Activated CD4-positive, alpha-beta T cell treated with anti-CD3 and anti-CD28 coated beads for 36 hours (primary cell): ENCODE measurements at regions of chr9 and their contacts with region 1.

Region 1: DNA sequence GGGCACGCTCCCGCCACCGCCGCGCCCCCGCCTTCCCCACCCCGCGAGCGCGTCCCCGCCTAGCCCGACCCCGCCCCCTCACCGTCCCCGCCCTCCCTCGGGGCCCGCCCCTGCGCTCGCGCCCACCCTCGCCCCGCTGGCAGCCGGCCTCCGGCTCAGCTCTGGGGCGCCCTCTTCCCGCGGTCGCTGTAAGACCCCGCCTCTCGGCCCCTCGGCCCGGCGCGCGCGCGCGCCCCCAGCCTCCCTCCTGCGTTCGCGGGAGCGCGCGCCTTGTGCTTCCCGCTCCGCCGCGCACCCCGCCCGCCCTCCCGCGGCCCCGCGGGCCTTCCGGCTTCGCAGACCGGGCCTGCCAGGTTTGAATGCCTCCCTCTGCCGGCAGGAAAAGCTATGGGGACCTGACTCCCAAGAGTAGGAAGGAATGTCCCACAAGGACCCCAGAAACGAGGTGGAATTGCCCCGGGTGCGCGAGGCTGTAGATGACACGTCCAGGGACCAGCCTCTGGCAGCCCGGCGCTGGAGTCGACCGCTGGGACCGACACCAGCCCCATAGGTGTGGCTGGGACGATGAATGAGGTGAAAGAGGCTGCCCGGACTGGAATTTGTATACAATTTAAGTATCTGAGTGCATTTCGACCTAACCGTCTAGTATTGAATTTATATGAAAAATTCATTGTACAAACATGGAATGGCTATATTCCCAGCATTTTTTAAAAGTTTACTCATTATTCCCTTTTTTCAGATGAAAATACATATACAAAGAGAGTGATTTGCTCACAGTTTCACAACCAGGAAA is 416 bp upstream of the PTBP3 start:
- DNase-seq: peak; percentile 97
- ATAC-seq: peak; percentile 84
- H3K4me3 Mint-ChIP-seq: peak overlapping the region; percentile 89
- H3K27ac Mint-ChIP-seq: peak overlapping the region; percentile 98
- H3K4me1 Mint-ChIP-seq: peaks cover 33% of the 10 kb centered on the region
- H3K27me3 Mint-ChIP-seq: no peaks in the 10 kb centered on the region

Region 2: GRCh38 chr9:111916234-111916645 is 417.6 kb before region 1 on chr9:
- CTCF ChIA-PET with region 1: no interaction called
- POLR2A ChIA-PET with region 1: no interaction called
- intact Hi-C with region 1: loop called (anchors 5 kb)
- DNase-seq: peak; percentile 63
- ATAC-seq: peak; percentile 85
- H3K4me3 Mint-ChIP-seq: peak overlapping the region; percentile 39
- H3K27ac Mint-ChIP-seq: peak overlapping the region; percentile 69
- H3K4me1 Mint-ChIP-seq: peaks cover 56% of the 10 kb centered on the region
- H3K27me3 Mint-ChIP-seq: no peaks in the 10 kb centered on the region

Region 3: DNA sequence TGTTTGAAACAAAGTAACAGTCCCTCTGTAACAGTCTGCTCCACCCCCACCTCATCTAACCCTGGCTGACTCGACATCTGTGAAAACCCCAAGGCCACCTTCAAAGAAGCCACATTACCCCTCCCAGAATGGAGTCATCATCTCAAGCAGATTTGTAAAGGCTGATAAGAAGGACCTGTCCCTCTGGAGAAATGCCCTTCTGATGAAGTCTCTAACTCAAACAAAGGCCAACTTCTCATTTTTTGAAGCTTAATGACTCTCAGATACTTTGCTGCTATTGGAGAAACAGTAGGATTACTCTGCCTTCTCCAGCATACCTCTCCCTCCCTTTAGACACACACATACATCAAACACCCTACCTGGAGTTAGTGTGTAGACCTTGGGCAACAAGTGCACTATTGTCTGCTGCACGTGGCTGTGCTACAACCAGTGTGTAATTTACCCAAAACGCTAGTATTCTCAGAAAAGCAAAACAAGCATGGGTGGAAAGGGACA is 153.4 kb before region 1 on chr9:
- CTCF ChIA-PET with region 1: no interaction called
- POLR2A ChIA-PET with region 1: no interaction called
- intact Hi-C with region 1: loop called (anchors 1 to 2 kb)
- DNase-seq: peak; percentile 74
- ATAC-seq: peak; percentile 87
- H3K4me3 Mint-ChIP-seq: peak overlapping the region; percentile 18
- H3K27ac Mint-ChIP-seq: peak overlapping the region; percentile 5
- H3K4me1 Mint-ChIP-seq: peaks cover 30% of the 10 kb centered on the region
- H3K27me3 Mint-ChIP-seq: peaks cover 14% of the 10 kb centered on the region

Region 4: GRCh38 chr9:112315331-112316257 is 18.2 kb before region 1 on chr9:
- CTCF ChIA-PET with region 1: interaction called, 10 read pairs
- POLR2A ChIA-PET with region 1: no interaction called
- intact Hi-C with region 1: loop called in 1 of 2 experiments (anchors 2 kb)
- DNase-seq: no peak
- ATAC-seq: no peak
- H3K4me3 Mint-ChIP-seq: no peak overlapping the region
- H3K27ac Mint-ChIP-seq: peak overlapping the region; percentile 88
- H3K4me1 Mint-ChIP-seq: peaks cover 71% of the 10 kb centered on the region
- H3K27me3 Mint-ChIP-seq: no peaks in the 10 kb centered on the region

Region 5: DNA sequence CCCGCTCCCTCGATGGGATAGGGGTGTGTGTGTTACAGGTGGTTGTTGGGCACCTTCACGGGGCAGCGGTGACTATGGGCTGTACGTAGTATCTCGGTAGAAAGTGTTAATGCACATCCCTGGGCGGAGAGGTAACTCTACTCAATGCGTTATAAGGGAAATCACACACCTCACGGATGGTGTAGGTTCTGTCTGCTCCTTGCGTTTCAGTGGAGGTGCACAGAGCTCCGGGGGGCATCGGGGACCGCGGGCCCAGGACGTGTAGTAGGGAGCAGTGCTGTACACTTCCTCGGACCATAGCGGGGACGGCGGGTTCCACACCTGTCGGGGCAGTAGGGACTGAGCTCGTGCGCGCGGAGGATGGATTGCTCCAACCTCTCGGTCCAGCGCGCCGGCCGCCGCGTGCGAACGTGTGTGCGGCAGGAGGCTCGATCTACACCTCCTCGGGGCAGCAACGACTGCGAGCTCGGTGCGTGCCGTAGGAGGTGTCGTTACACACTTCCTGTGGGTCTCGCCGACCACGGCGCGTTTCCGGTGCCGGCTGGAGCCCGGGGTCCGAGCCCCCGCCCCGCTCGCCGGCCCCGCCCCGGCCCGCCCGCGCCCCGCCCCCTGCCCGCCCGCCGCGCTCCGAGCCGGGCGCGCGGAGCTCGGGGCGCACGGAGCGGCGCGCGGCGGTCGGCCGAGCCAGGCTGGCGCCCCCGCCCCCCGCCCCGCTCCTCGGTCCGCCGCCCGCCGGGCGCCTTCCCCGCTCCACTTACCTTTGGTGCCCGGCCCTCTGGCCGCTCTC is 152.6 kb after region 1 on chr9 and contains the start of gene KIAA1958:
- CTCF ChIA-PET with region 1: no interaction called
- POLR2A ChIA-PET with region 1: no interaction called
- intact Hi-C with region 1: loop called in 1 of 2 experiments (anchors 1 kb)
- DNase-seq: peak; percentile 94
- ATAC-seq: peak; percentile 96
- H3K4me3 Mint-ChIP-seq: peak within 1 kb of the TSS; percentile 95
- H3K27ac Mint-ChIP-seq: peak within 1 kb of the TSS; percentile 95
- H3K4me1 Mint-ChIP-seq: peaks cover 37% of the 10 kb centered on the region
- H3K27me3 Mint-ChIP-seq: no peaks in the 10 kb centered on the region
- total RNA-seq, gene KIAA1958: 9.7 to 13.0 TPM